Gastrocnemius medialis (tissue), 4 donors: ENCODE measurements at regions of chr7 and their contacts with region 1.

Region 1: GRCh38 chr7:7662527-7662926 is 22.0 kb downstream of the UMAD1 start:
- DNase-seq: no peak
- ATAC-seq: no peak
- H3K4me3 ChIP-seq: no peak overlapping the region
- H3K27ac ChIP-seq: no peak overlapping the region
- H3K4me1 ChIP-seq: no peaks in the 10 kb centered on the region
- H3K27me3 ChIP-seq: no peaks in the 10 kb centered on the region
- CTCF ChIP-seq: no peak
- POLR2A ChIP-seq: no peak

Region 2: GRCh38 chr7:7529328-7529727 is 133.2 kb before region 1 on chr7:
- in situ Hi-C with region 1: no loop called
- intact Hi-C with region 1: no loop called
- DNase-seq: no peak
- ATAC-seq: no peak
- H3K4me3 ChIP-seq: no peak overlapping the region
- H3K27ac ChIP-seq: no peak overlapping the region
- H3K4me1 ChIP-seq: no peaks in the 10 kb centered on the region
- H3K27me3 ChIP-seq: no peaks in the 10 kb centered on the region
- CTCF ChIP-seq: no peak
- POLR2A ChIP-seq: no peak

Region 3: DNA sequence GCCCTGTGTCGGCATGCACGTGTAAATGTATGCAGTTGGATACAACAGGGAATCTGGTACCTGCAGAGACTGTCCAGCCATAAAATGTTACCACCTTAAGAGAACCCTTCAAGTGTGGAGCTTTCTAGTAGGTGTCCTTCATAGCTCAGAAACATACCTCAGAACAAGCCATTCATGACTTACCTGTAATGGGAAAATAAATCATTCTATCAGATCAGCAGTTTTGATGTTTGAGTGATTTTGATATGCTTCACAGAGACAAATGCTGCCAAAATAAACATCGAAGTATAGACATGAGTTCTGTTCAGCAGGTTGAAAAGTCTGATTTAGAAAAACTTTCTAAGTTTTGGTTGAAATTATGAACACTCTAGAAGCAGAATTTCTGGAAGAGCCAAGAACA is 55.5 kb before region 1 on chr7:
- in situ Hi-C with region 1: no loop called
- intact Hi-C with region 1: no loop called
- DNase-seq: no peak
- ATAC-seq: no peak
- H3K4me3 ChIP-seq: no peak overlapping the region
- H3K27ac ChIP-seq: no peak overlapping the region
- H3K4me1 ChIP-seq: no peaks in the 10 kb centered on the region
- H3K27me3 ChIP-seq: no peaks in the 10 kb centered on the region
- CTCF ChIP-seq: no peak
- POLR2A ChIP-seq: no peak

Region 4: GRCh38 chr7:8190119-8190895 is 527.8 kb after region 1 on chr7:
- in situ Hi-C with region 1: loop called in 1 of 4 experiments (anchors 10 kb)
- intact Hi-C with region 1: no loop called
- DNase-seq: peak in 1 of 2 donors; percentile 15
- ATAC-seq: peak; percentile 56 to 83
- H3K4me3 ChIP-seq: no peak overlapping the region
- H3K27ac ChIP-seq: no peak overlapping the region
- H3K4me1 ChIP-seq: peaks cover 0 to 7% of the 10 kb centered on the region in 2 donors
- H3K27me3 ChIP-seq: no peaks in the 10 kb centered on the region
- CTCF ChIP-seq: peak; percentile 32 to 72 (median 44)
- POLR2A ChIP-seq: no peak